MCF 10A (cell line): ENCODE measurements at regions of chr10 and their contacts with region 1.

Region 1: GRCh38 chr10:123994417-123995081 is 98.8 kb downstream of the CHST15 start:
- DNase-seq: peak; percentile 89
- H3K4me3 Mint-ChIP-seq: peak overlapping the region; percentile 75
- H3K27ac Mint-ChIP-seq: no peak overlapping the region
- H3K4me1 Mint-ChIP-seq: peaks cover 42% of the 10 kb centered on the region
- H3K27me3 Mint-ChIP-seq: peaks cover 27% of the 10 kb centered on the region
- CTCF ChIP-seq: peak; percentile 96

Region 2: GRCh38 chr10:123429706-123430221 is 564.8 kb before region 1 on chr10:
- CTCF ChIA-PET with region 1: no interaction called
- POLR2A ChIA-PET with region 1: no interaction called
- intact Hi-C with region 1: no loop called
- DNase-seq: no peak
- H3K4me3 Mint-ChIP-seq: no peak overlapping the region
- H3K27ac Mint-ChIP-seq: no peak overlapping the region
- H3K4me1 Mint-ChIP-seq: no peaks in the 10 kb centered on the region
- H3K27me3 Mint-ChIP-seq: peaks cover 67% of the 10 kb centered on the region
- CTCF ChIP-seq: no peak

Region 3: DNA sequence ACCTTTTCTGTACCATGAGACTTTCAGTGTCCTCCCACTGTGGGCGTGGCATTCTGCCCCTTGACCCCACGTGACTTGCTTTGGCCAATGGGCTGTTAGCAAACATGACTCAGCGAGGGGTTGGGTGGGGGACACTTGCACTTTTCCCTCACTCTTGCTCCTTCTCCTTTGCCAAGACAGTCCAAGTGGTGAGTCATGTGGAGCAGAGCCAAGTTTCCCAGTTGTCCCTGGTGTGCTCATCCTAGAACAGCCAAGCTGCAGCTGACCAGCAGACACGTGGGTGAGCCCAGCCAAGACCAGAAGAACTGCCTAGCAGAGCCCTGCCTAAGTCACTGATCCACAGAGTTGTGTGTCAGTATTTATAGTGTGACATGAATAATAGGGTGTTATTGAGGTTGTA is 20.1 kb before region 1 on chr10:
- CTCF ChIA-PET with region 1: interaction called, 11 read pairs
- POLR2A ChIA-PET with region 1: interaction called, 3 read pairs
- intact Hi-C with region 1: no loop called
- DNase-seq: peak; percentile 90
- H3K4me3 Mint-ChIP-seq: no peak overlapping the region
- H3K27ac Mint-ChIP-seq: no peak overlapping the region
- H3K4me1 Mint-ChIP-seq: no peaks in the 10 kb centered on the region
- H3K27me3 Mint-ChIP-seq: peaks cover 51% of the 10 kb centered on the region
- CTCF ChIP-seq: no peak

Region 4: DNA sequence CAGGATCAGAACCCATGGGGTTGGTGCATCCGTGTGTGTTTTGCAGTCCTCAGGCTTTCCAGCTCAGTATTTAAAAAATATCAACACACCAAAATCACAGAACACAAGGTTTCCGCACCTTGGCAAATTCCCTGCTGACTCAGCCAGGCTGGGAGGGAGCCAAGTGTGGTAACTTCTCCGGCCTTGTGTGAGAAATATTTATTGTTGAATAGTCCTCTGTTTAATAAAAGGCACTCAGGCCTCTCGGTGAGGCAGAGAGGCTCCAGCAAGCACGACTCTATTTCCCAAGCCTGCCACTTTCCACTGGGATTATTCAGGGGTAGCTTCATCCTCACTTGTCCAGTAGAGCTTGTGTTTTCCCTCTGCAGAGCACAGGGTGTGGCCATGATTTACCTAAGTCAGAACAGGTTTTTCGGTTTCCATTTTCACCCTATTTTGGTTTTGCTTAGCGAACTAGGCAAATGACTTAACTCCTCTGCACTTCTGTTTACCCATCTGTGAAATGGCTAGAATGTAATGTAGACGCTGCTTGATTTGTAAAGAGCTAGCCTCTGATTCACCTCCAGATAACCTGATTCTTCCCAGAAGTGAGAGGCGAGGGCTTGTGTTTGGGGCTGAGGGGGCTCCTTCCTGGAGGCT is 111.8 kb after region 1 on chr10:
- CTCF ChIA-PET with region 1: interaction called, 28 read pairs
- POLR2A ChIA-PET with region 1: interaction called, 24 read pairs
- intact Hi-C with region 1: loop called (anchors 5 kb)
- DNase-seq: peak; percentile 97
- H3K4me3 Mint-ChIP-seq: peak overlapping the region; percentile 70
- H3K27ac Mint-ChIP-seq: peak overlapping the region; percentile 99
- H3K4me1 Mint-ChIP-seq: peaks cover 40% of the 10 kb centered on the region
- H3K27me3 Mint-ChIP-seq: no peaks in the 10 kb centered on the region
- CTCF ChIP-seq: no peak

Region 5: GRCh38 chr10:124378881-124379471 is 384.4 kb after region 1 on chr10:
- CTCF ChIA-PET with region 1: interaction called, 306 read pairs
- POLR2A ChIA-PET with region 1: interaction called, 3 read pairs
- intact Hi-C with region 1: loop called (anchors 2 kb)
- DNase-seq: peak; percentile 94
- H3K4me3 Mint-ChIP-seq: no peak overlapping the region
- H3K27ac Mint-ChIP-seq: no peak overlapping the region
- H3K4me1 Mint-ChIP-seq: peaks cover 8% of the 10 kb centered on the region
- H3K27me3 Mint-ChIP-seq: no peaks in the 10 kb centered on the region
- CTCF ChIP-seq: no peak

Region 6: DNA sequence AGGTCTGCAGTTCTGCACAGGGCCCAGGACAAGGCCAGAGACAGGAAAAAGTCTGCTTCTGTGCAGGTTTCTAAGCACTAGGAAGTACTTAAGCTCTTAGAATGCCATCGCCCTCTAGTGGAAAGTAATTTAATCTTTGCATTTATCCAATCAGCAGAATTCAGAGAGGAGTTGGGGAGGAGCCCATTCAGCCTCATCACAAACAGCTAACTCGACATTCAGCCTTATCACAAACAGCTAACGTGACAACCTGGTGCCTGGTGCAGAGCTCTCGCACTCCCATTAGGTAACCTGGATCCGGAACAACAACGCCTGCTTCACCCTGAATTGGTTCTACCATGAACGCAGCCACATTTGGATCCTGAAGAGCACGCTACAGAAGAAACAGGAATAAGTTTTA is 409.0 kb after region 1 on chr10:
- CTCF ChIA-PET with region 1: interaction called, 47 read pairs
- POLR2A ChIA-PET with region 1: interaction called, 5 read pairs
- intact Hi-C with region 1: loop called (anchors 1 kb)
- DNase-seq: peak; percentile 81
- H3K4me3 Mint-ChIP-seq: no peak overlapping the region
- H3K27ac Mint-ChIP-seq: no peak overlapping the region
- H3K4me1 Mint-ChIP-seq: no peaks in the 10 kb centered on the region
- H3K27me3 Mint-ChIP-seq: no peaks in the 10 kb centered on the region
- CTCF ChIP-seq: peak; percentile 46

Region 7: DNA sequence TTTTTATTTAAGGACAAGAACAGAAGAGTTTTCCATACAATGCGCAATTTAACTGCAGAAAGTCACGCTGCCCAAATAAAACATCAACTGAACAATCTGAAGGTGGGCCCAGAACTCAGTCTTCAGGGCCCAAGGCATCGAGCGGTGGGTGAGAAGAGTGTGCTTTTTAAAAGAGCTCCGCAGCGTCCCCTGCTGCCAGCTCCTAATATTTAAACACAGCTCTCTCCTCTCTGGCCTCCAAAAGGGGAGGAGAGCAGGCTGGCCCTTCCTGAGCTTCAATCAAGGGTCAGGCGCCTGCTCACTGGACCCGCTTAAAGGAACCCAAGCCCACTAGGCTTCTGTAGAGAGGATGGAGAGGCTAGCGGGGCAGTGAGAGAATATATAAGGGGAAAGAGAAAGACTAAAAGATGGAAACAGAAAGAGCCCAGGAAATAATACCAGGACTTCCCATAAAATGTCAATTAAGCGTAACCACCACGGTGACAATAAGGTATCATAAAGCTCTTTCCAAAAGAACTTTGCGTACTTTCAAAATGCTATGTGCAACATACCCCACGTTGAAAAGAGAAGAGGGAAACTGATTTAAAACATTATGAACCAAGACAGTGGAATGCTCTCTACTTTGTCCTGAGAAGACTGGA is 746.9 kb after region 1 on chr10:
- CTCF ChIA-PET with region 1: interaction called, 5 read pairs
- POLR2A ChIA-PET with region 1: no interaction called
- intact Hi-C with region 1: loop called (anchors 2 kb)
- DNase-seq: peak; percentile 86
- H3K4me3 Mint-ChIP-seq: peak overlapping the region; percentile 85
- H3K27ac Mint-ChIP-seq: peak overlapping the region; percentile 73
- H3K4me1 Mint-ChIP-seq: peaks cover 48% of the 10 kb centered on the region
- H3K27me3 Mint-ChIP-seq: no peaks in the 10 kb centered on the region
- CTCF ChIP-seq: peak; percentile 79